ENCODE measurements at regions of chr17 and their contacts with region 1.

Region 1: DNA sequence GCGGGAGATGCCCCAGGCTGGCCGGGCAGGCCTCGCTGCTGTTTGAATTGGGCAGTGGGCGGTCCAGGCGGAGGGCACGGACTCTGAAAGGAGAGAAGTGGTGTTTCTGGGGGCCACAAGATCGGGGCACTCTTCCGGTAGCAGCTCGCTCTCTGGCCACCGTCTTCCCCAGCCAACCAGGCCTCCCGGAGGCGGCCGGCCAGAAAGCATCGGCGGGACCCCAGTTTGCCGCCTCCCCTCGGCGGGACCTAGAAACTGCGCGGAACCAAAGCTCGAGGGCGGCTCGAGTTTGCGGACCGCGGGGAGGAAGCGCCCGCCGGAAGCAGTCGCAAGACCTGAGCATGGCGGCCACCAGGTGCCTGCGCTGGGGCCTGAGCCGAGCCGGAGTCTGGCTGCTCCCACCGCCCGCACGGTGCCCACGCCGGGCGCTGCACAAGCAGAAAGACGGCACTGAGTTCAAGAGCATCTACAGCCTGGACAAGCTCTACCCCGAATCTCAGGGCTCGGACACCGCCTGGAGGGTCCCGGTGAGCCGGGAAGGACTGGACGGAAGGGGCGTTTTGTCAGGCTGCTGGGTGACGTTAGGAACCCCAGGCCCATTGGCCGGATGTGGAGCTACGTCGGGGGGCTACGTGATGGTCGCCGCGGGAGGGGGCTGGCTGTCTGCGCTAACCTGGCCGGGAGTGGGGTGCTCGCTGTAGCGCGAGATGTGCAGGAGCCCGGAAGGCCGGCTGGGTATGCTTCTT is at the start of gene MRPL58:
- DNase-seq: peak; percentile 74 to 83
- H3K4me3 ChIP-seq: peak within 1 kb of the TSS; percentile 90
- H3K27ac ChIP-seq: peak within 1 kb of the TSS; percentile 43
- H3K4me1 ChIP-seq: peaks cover 31% of the 10 kb centered on the region
- H3K27me3 ChIP-seq: no peaks in the 10 kb centered on the region
- CTCF ChIP-seq: peak; percentile 70
- total RNA-seq, gene MRPL58: 42.8 and 48.4 TPM in 2 replicates

Region 2: DNA sequence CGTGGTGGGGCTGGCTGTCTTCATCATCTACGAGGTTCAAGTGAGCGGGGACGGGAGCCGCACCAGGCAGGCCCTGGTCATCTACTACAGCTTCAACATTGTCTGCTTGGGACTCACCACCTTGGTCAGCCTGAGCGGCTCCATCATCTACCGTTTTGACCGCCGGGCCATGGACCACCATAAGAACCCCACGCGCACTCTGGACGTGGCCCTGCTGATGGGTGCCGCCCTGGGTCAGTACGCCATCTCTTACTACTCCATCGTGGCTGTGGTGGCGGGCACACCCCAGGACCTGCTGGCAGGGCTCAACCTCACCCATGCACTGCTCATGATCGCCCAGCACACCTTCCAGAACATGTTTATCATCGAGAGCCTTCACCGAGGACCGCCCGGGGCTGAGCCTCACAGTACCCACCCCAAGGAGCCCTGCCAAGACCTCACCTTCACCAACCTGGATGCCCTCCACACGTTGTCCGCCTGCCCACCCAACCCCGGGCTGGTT is 81.9 kb before region 1 on chr17:
- CTCF ChIA-PET with region 1: no interaction called
- POLR2A ChIA-PET with region 1: no interaction called
- intact Hi-C with region 1: no loop called
- DNase-seq: no peak
- H3K4me3 ChIP-seq: no peak overlapping the region
- H3K27ac ChIP-seq: no peak overlapping the region
- H3K4me1 ChIP-seq: no peaks in the 10 kb centered on the region
- H3K27me3 ChIP-seq: peaks cover 24% of the 10 kb centered on the region
- CTCF ChIP-seq: no peak

Region 3: GRCh38 chr17:74993453-74994021 is 19.0 kb before region 1 on chr17:
- CTCF ChIA-PET with region 1: interaction called, 7 read pairs
- POLR2A ChIA-PET with region 1: interaction called, 3 read pairs
- intact Hi-C with region 1: loop called (anchors 2 kb)
- DNase-seq: peak in 1 of 2 experiments; percentile 80
- H3K4me3 ChIP-seq: no peak overlapping the region
- H3K27ac ChIP-seq: peak overlapping the region; percentile 80
- H3K4me1 ChIP-seq: peaks cover 40% of the 10 kb centered on the region
- H3K27me3 ChIP-seq: no peaks in the 10 kb centered on the region
- CTCF ChIP-seq: no peak